Activated CD8-positive, alpha-beta T cell treated with anti-CD3 and anti-CD28 coated beads, Interleukin-2, amount 10 ng/mL, durations not matched to agents 7 days and 5 days (primary cell): ENCODE measurements at regions of chr3 and their contacts with region 1.

Region 1: DNA sequence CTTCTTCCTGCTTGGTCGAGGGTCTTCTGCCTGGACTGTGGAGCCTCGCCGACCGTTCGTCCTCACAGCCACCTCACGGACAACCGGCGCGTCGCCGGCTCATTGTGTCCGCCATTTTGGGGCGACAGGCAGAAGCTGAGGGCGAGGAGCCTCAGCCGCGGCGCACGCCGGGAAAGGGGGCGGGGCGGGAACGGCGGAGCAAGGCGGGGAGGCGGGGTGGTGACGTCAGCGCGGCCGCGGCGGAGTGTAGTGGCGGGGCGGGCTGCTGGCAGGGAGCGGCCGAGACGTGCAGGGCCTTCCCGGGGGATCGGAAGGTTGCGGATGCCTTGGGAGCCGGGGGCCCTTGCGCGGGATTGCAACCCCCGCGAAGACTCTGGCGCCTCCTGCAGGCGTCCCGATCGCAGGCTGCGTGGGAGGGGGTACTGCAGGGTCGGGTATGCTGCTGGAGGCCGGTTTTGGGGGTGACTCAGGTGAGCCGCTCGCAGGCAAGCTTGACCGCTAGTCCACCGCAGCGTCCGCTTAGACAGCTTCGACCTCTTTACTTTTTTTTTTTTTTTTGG is at the start of gene WDR82:
- DNase-seq: peak; percentile 98
- ATAC-seq: peak; percentile 79
- H3K4me3 Mint-ChIP-seq: peak within 1 kb of the TSS; percentile 100
- H3K27ac Mint-ChIP-seq: peak within 1 kb of the TSS; percentile 99
- H3K4me1 Mint-ChIP-seq: peaks cover 56% of the 10 kb centered on the region
- H3K27me3 Mint-ChIP-seq: no peaks in the 10 kb centered on the region
- total RNA-seq, gene WDR82: 131 TPM

Region 2: DNA sequence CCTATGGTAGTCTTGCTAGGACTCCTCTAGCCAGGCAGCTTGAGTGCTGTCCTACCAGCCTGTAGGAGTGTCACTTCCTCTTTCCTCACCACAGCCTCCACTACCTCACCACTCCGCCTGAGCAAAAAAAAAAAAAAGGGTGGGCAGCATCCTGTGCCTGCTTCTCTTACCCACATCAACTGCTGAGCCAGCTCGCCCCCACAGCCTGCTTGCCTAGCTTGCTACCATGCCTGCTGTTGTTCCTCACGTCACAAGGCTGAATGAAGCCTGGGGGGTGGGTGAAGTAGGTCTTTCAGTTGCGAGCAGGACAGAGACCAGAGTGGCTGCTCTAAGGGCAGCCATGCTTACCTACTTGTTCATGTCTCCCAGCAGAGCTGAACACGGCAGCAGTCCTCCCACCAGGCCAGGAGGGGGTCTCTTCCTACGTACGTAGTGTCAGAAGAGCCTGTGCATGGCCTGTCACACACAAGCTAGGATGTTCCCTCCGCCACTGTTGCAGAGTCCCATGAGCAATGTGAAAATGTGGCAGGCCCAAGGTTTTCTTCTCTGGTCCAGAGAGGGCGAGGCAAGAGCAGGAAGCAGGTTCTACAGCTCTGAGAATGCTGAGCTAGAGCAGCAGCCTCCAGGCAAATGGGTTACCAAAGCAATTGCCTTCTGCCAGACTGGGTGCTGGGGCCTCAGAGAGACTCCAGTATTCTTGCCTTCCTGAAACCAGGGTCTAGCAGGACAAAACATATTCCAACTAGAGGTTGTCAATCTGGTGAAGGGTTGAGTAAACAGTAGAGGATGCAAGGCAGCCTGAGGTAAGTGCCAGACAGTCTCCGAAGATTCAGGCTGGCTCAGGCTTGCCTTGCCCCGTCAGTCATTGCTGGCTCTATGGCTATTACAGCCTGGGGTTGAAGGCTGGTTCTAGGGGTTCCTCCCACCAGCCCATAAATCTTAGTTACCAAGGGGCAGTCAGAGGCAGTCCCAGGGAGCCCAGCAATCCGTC is 25.0 kb before region 1 on chr3:
- CTCF ChIA-PET with region 1: interaction called, 66 read pairs
- POLR2A ChIA-PET with region 1: interaction called, 400 read pairs
- DNase-seq: peak; percentile 90
- ATAC-seq: peak; percentile 88
- H3K4me3 Mint-ChIP-seq: peak overlapping the region; percentile 77
- H3K27ac Mint-ChIP-seq: peak overlapping the region; percentile 99
- H3K4me1 Mint-ChIP-seq: peaks cover 95% of the 10 kb centered on the region
- H3K27me3 Mint-ChIP-seq: no peaks in the 10 kb centered on the region

Region 3: GRCh38 chr3:52259035-52259434 is 19.6 kb before region 1 on chr3:
- CTCF ChIA-PET with region 1: interaction called, 66 read pairs
- POLR2A ChIA-PET with region 1: interaction called, 400 read pairs
- DNase-seq: no peak
- ATAC-seq: no peak
- H3K4me3 Mint-ChIP-seq: no peak overlapping the region
- H3K27ac Mint-ChIP-seq: peak overlapping the region; percentile 8
- H3K4me1 Mint-ChIP-seq: peaks cover 88% of the 10 kb centered on the region
- H3K27me3 Mint-ChIP-seq: no peaks in the 10 kb centered on the region

Region 4: GRCh38 chr3:52291508-52292181 is 13.1 kb after region 1 on chr3:
- CTCF ChIA-PET with region 1: interaction called, 38 read pairs
- POLR2A ChIA-PET with region 1: interaction called, 77 read pairs
- DNase-seq: peak; percentile 70
- ATAC-seq: peak; percentile 23
- H3K4me3 Mint-ChIP-seq: no peak overlapping the region
- H3K27ac Mint-ChIP-seq: peak overlapping the region; percentile 78
- H3K4me1 Mint-ChIP-seq: peaks cover 34% of the 10 kb centered on the region
- H3K27me3 Mint-ChIP-seq: no peaks in the 10 kb centered on the region